Activated B cell treated with CpG ODN at 0.5 μM for 24 hours (primary cell): ENCODE measurements at regions of chr9 and their contacts with region 1.

Region 1: GRCh38 chr9:28342815-28343338 is 769.6 kb upstream of the C9orf72 start:
- DNase-seq: no peak
- ATAC-seq: no peak
- H3K4me3 Mint-ChIP-seq: no peak overlapping the region
- H3K27ac Mint-ChIP-seq: no peak overlapping the region
- H3K4me1 Mint-ChIP-seq: no peaks in the 10 kb centered on the region
- H3K27me3 Mint-ChIP-seq: no peaks in the 10 kb centered on the region
- CTCF ChIP-seq: no peak

Region 2: GRCh38 chr9:28197653-28198052 is 145.2 kb before region 1 on chr9:
- CTCF ChIA-PET with region 1: no interaction called
- POLR2A ChIA-PET with region 1: no interaction called
- intact Hi-C with region 1: no loop called
- DNase-seq: no peak
- ATAC-seq: no peak
- H3K4me3 Mint-ChIP-seq: no peak overlapping the region
- H3K27ac Mint-ChIP-seq: no peak overlapping the region
- H3K4me1 Mint-ChIP-seq: no peaks in the 10 kb centered on the region
- H3K27me3 Mint-ChIP-seq: no peaks in the 10 kb centered on the region
- CTCF ChIP-seq: no peak

Region 3: GRCh38 chr9:28289746-28290145 is 53.1 kb before region 1 on chr9:
- CTCF ChIA-PET with region 1: no interaction called
- POLR2A ChIA-PET with region 1: no interaction called
- intact Hi-C with region 1: loop called (anchors 5 kb)
- DNase-seq: no peak
- ATAC-seq: no peak
- H3K4me3 Mint-ChIP-seq: no peak overlapping the region
- H3K27ac Mint-ChIP-seq: no peak overlapping the region
- H3K4me1 Mint-ChIP-seq: no peaks in the 10 kb centered on the region
- H3K27me3 Mint-ChIP-seq: no peaks in the 10 kb centered on the region
- CTCF ChIP-seq: no peak